ENCODE measurements at regions of chr3 and their contacts with region 1.

Region 1: GRCh38 chr3:62723166-62723913 is 151.9 kb downstream of the CADPS start:
- DNase-seq: no peak
- H3K4me3 ChIP-seq: no peak overlapping the region
- H3K27ac ChIP-seq: no peak overlapping the region
- H3K4me1 ChIP-seq: no peaks in the 10 kb centered on the region
- H3K27me3 ChIP-seq: no peaks in the 10 kb centered on the region; the same call in 1 of the 2 replicates
- CTCF ChIP-seq: no peak

Region 2: GRCh38 chr3:62527474-62528073 is 195.8 kb before region 1 on chr3:
- CTCF ChIA-PET with region 1: interaction called, 14 read pairs
- POLR2A ChIA-PET with region 1: no interaction called
- intact Hi-C with region 1: no loop called
- DNase-seq: no peak
- H3K4me3 ChIP-seq: no peak overlapping the region
- H3K27ac ChIP-seq: no peak overlapping the region
- H3K4me1 ChIP-seq: no peaks in the 10 kb centered on the region
- H3K27me3 ChIP-seq: peaks cover 36% of the 10 kb centered on the region
- CTCF ChIP-seq: no peak

Region 3: GRCh38 chr3:63207066-63207640 is 483.8 kb after region 1 on chr3:
- CTCF ChIA-PET with region 1: no interaction called
- POLR2A ChIA-PET with region 1: no interaction called
- intact Hi-C with region 1: no loop called
- DNase-seq: no peak
- H3K4me3 ChIP-seq: no peak overlapping the region
- H3K27ac ChIP-seq: no peak overlapping the region
- H3K4me1 ChIP-seq: no peaks in the 10 kb centered on the region
- H3K27me3 ChIP-seq: no peaks in the 10 kb centered on the region
- CTCF ChIP-seq: no peak

Measured in PC-9 (cell line).